ENCODE measurements at regions of chr3 and their contacts with region 1.

Region 1: DNA sequence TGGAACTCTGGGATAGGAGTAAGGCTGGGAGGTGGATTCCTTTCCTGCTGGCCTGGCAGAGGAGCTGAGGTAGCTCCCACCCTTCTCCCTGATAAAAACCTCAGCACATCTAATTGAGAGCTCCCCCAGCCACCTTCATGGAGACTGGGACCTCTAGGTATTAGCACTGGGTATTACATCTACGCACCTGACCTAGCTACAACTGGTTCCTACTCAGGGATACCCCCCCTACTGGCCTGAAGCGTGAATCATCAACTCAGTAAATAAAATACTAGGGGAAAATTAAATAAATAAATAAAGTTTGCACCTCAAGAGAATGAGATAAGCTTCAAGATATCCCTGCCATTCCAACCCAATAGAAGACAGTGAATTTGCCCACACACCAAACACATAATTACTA is 140.4 kb downstream of the NEK10 start:
- DNase-seq: peak in 1 of 2 experiments; percentile 23
- H3K4me3 ChIP-seq: no peak overlapping the region
- H3K27ac ChIP-seq: no peak overlapping the region
- H3K4me1 ChIP-seq: no peaks in the 10 kb centered on the region
- H3K27me3 ChIP-seq: no peaks in the 10 kb centered on the region
- CTCF ChIP-seq: peak; percentile 14 to 95 (median 69)
- EP300 ChIP-seq: no peak
- POLR2A ChIP-seq: no peak
- RAD21 ChIP-seq: peak; percentile 56 to 69

Region 2: DNA sequence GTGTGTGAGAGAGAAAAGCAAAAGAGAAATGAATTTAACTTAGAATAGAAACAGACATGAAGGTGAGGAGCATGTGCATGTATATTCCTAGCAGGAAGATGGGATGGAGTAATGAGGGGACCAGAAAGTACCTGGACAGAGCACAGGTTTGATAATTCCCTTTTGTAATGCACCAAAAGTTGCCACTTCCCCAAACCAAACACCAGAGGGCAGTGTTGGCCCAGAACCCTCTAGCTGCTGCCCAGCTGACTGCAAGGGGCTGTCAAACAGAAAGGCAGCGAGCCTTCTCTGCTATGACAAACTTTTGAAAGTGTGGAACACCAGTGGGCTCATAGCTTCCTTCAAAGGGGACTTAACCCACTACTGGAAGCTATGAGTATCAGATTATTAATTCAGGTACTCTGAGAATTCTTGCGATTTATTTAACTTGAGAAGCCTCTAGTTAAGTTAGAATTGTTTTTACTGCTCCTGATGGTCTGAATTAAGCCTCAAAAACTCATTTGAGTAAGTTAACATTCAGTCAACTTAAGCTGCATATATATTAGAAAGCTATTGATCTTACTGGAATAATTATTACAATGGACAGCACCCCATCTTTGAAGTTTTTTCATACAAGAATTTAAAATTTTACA is 94.5 kb before region 1 on chr3:
- CTCF ChIA-PET with region 1: interaction called, 13 read pairs
- POLR2A ChIA-PET with region 1: no interaction called
- DNase-seq: peak in 1 of 2 experiments; percentile 72
- H3K4me3 ChIP-seq: no peak overlapping the region
- H3K27ac ChIP-seq: no peak overlapping the region
- H3K4me1 ChIP-seq: no peaks in the 10 kb centered on the region
- H3K27me3 ChIP-seq: no peaks in the 10 kb centered on the region
- CTCF ChIP-seq: peak; percentile 76 to 97 (median 89)
- EP300 ChIP-seq: no peak
- POLR2A ChIP-seq: no peak
- RAD21 ChIP-seq: peak; percentile 96 to 98

Region 3: DNA sequence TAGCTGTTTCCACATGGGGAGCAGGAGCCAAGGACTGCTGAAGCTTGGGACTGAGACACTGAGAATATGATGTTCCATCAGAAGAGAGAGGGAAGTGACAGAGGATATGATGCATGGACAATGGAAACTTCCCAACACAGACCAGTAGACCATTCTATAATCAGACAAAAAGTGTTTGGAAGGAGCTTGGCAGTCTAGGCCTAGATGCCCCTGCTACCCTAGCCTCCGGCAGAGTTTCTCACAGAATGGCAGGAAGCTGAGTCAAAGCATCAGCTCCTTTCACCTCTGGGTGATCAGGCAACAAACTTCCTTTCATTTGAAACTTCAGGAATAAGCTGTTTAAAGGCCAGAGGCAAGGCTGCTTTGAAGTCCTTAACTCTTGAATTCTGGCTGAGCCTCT is 81.6 kb before region 1 on chr3:
- CTCF ChIA-PET with region 1: interaction called, 18 read pairs
- POLR2A ChIA-PET with region 1: no interaction called
- DNase-seq: no peak
- H3K4me3 ChIP-seq: no peak overlapping the region
- H3K27ac ChIP-seq: no peak overlapping the region
- H3K4me1 ChIP-seq: no peaks in the 10 kb centered on the region
- H3K27me3 ChIP-seq: no peaks in the 10 kb centered on the region
- CTCF ChIP-seq: no peak
- EP300 ChIP-seq: no peak
- POLR2A ChIP-seq: no peak
- RAD21 ChIP-seq: no peak

Region 4: GRCh38 chr3:27176256-27176655 is 52.5 kb before region 1 on chr3:
- CTCF ChIA-PET with region 1: interaction called, 10 read pairs
- POLR2A ChIA-PET with region 1: no interaction called
- DNase-seq: no peak
- H3K4me3 ChIP-seq: no peak overlapping the region
- H3K27ac ChIP-seq: no peak overlapping the region
- H3K4me1 ChIP-seq: no peaks in the 10 kb centered on the region
- H3K27me3 ChIP-seq: no peaks in the 10 kb centered on the region
- CTCF ChIP-seq: no peak
- EP300 ChIP-seq: no peak
- POLR2A ChIP-seq: no peak
- RAD21 ChIP-seq: no peak

Region 5: GRCh38 chr3:27185231-27185989 is 43.4 kb before region 1 on chr3:
- CTCF ChIA-PET with region 1: interaction called, 13 read pairs
- POLR2A ChIA-PET with region 1: no interaction called
- DNase-seq: no peak
- H3K4me3 ChIP-seq: no peak overlapping the region
- H3K27ac ChIP-seq: no peak overlapping the region
- H3K4me1 ChIP-seq: no peaks in the 10 kb centered on the region
- H3K27me3 ChIP-seq: no peaks in the 10 kb centered on the region
- CTCF ChIP-seq: no peak
- EP300 ChIP-seq: no peak
- POLR2A ChIP-seq: no peak
- RAD21 ChIP-seq: no peak

Region 6: DNA sequence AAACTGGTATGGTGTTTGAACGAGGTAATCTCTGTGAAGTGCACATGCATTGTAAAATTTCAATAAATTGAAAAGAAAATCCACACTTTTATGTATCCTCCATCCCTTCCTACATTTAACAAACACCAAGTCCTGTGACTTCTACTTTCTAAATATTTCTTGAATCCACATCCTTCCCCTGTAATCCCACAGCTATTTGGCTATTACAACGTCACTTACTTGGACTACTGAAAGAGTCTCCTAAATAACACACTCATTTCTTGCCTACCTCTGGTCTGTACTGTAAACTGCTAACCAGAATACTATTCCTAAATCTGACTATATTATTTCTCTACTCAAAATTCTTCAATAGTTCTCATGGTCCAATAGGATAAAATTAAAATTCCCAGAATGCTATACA is 35.7 kb before region 1 on chr3:
- CTCF ChIA-PET with region 1: interaction called, 13 read pairs
- POLR2A ChIA-PET with region 1: no interaction called
- DNase-seq: no peak
- H3K4me3 ChIP-seq: no peak overlapping the region
- H3K27ac ChIP-seq: no peak overlapping the region
- H3K4me1 ChIP-seq: no peaks in the 10 kb centered on the region
- H3K27me3 ChIP-seq: no peaks in the 10 kb centered on the region
- CTCF ChIP-seq: no peak
- EP300 ChIP-seq: no peak
- POLR2A ChIP-seq: no peak
- RAD21 ChIP-seq: no peak

Region 7: GRCh38 chr3:27209617-27210264 is 19.1 kb before region 1 on chr3:
- CTCF ChIA-PET with region 1: interaction called, 16 read pairs
- POLR2A ChIA-PET with region 1: no interaction called
- DNase-seq: no peak
- H3K4me3 ChIP-seq: no peak overlapping the region
- H3K27ac ChIP-seq: no peak overlapping the region
- H3K4me1 ChIP-seq: peaks cover 0 to 18% (median 5%) of the 10 kb centered on the region in 4 experiments; a peak in 4 of 7 replicates
- H3K27me3 ChIP-seq: no peaks in the 10 kb centered on the region
- CTCF ChIP-seq: no peak
- EP300 ChIP-seq: no peak
- POLR2A ChIP-seq: no peak
- RAD21 ChIP-seq: no peak

Region 8: DNA sequence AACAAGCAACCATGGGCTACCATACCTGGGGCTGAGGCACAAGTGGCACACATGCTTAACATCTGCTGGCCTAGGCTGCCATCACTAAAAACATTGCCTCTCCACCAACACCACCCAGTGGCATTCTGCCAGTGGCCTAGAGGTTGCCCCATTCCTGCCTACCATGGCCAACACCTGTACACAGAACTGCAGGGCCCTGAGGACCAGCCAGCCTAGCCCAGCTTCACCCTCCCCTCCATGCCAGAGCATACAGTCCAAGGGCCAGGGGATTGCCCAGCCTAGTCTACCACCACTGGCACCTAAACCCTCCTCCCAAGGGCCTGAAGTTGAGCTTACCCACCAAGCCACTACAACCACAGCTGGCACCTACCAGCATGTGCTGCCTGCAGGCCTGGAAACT is 105.0 kb after region 1 on chr3:
- CTCF ChIA-PET with region 1: no interaction called
- POLR2A ChIA-PET with region 1: no interaction called
- DNase-seq: no peak
- H3K4me3 ChIP-seq: no peak overlapping the region
- H3K27ac ChIP-seq: no peak overlapping the region
- H3K4me1 ChIP-seq: no peaks in the 10 kb centered on the region
- H3K27me3 ChIP-seq: no peaks in the 10 kb centered on the region
- CTCF ChIP-seq: no peak
- EP300 ChIP-seq: no peak
- POLR2A ChIP-seq: no peak
- RAD21 ChIP-seq: no peak

Region 9: DNA sequence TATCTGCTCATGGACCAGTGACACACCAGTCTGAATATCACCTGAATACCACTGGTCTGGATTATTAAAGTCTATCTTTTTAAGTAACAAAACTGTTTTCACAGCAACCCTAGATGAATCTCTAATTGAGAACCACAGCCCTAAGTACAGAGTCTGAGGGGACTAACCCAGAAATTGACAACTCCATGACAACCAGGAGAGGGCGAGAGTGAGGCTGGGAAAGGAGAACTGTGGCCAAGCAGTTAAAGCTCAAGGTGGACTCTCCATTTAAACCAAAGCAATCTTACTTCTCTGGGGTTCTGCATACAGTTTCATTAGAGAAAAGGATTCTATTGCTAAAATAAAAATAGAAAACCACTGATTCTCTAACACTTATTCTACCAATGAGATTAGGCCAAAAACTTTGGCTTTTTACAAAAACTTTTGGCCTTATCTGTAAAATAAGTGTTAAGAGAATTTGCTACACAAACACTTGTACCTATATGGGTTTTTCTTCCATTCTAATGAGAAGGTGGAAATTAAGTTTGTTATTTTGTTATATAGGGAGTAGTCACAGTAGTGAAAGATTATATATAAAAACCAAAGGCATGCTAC is 129.0 kb after region 1 on chr3:
- CTCF ChIA-PET with region 1: no interaction called
- POLR2A ChIA-PET with region 1: no interaction called
- DNase-seq: peak; percentile 25 to 55
- H3K4me3 ChIP-seq: no peak overlapping the region
- H3K27ac ChIP-seq: no peak overlapping the region
- H3K4me1 ChIP-seq: peaks cover 0 to 12% (median 6%) of the 10 kb centered on the region in 4 experiments; a peak in 5 of 7 replicates
- H3K27me3 ChIP-seq: peaks cover 0 to 1% (median 0%) of the 10 kb centered on the region in 4 experiments; a peak in 1 of 7 replicates
- CTCF ChIP-seq: peak; percentile 66 to 77 (median 68)
- EP300 ChIP-seq: no peak
- POLR2A ChIP-seq: no peak
- RAD21 ChIP-seq: peak; percentile 69 to 75

Region 10: DNA sequence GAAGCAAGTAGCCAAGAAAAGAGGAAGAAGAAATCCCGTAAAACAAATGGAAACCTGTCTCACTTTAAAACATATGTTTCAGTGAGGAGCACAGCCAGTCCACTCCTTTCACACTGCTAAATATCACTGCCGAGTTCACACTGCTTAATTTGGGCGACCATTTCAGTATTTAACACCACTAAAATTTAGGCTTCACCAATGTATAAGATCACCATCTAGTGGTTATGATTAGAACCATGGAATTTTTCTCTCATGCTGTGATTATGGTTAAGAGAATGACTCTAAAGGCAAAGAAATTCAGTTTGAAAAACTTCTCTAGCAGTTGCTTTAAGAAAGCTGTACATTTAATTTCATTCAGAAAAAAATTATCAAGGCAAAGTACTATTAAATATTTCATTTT is 238.7 kb after region 1 on chr3:
- CTCF ChIA-PET with region 1: no interaction called
- POLR2A ChIA-PET with region 1: no interaction called
- DNase-seq: no peak
- H3K4me3 ChIP-seq: no peak overlapping the region
- H3K27ac ChIP-seq: no peak overlapping the region
- H3K4me1 ChIP-seq: peaks cover 0 to 2% (median 0%) of the 10 kb centered on the region in 4 experiments; a peak in 2 of 7 replicates
- H3K27me3 ChIP-seq: no peaks in the 10 kb centered on the region
- CTCF ChIP-seq: no peak; a peak in 1 of 4 replicates
- EP300 ChIP-seq: no peak
- POLR2A ChIP-seq: no peak
- RAD21 ChIP-seq: peak; percentile 27 to 30; a peak in 3 of 4 replicates